ENCODE measurements at regions of chr22 and their contacts with region 1.

Region 1: GRCh38 chr22:23178512-23179254 is 1.6 kb upstream of the BCR start:
- DNase-seq: peak; percentile 56
- ATAC-seq: peak; percentile 28
- H3K4me3 Mint-ChIP-seq: peak overlapping the region; percentile 46
- H3K27ac Mint-ChIP-seq: peak overlapping the region; percentile 19
- H3K4me1 Mint-ChIP-seq: peaks cover 51% of the 10 kb centered on the region
- H3K27me3 Mint-ChIP-seq: peaks cover 3% of the 10 kb centered on the region
- CTCF ChIP-seq: peak; percentile 87

Region 2: DNA sequence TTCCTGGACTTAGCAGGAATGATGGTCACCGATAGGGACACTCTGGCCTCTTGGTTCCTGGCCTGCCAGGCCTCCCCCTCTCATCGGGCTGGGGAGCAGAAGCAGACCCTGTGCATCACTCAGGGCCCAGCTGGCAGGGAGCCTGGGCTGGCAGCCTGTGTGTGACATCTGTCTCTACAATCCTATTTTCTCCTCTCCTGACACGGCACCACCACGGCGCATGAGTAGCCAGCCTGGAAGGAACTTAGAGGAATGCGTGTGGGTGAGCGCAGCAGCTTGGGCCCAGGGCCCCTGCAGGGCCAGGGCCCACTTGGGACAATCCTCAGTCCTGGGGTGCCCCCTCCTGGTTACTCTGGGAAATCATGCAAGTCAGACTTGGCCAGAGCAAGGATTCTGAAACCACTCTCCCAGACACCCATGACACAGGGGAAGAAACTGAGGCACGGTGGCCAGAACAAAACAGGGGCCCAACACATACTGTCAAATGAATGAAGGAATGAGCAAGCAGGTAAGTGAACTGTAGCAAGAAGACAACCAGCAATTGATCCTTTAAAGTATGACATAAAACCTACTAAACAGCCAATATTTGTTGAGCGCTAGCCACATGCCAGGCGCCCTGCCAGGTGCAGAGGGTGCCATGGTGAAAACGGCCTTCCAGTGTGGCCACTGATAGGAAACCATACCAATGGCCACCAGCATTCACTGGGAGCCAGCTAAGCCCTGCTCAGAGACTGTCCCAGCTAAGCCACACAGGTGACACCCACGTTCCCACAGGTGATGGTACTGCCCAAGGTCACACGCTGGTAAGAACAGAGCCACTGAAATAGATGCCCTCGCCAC is 50.2 kb before region 1 on chr22:
- CTCF ChIA-PET with region 1: interaction called, 3 read pairs
- POLR2A ChIA-PET with region 1: no interaction called
- intact Hi-C with region 1: loop called (anchors 1 kb)
- DNase-seq: peak; percentile 64
- ATAC-seq: peak; percentile 99
- H3K4me3 Mint-ChIP-seq: no peak overlapping the region
- H3K27ac Mint-ChIP-seq: no peak overlapping the region
- H3K4me1 Mint-ChIP-seq: peaks cover 4% of the 10 kb centered on the region
- H3K27me3 Mint-ChIP-seq: no peaks in the 10 kb centered on the region
- CTCF ChIP-seq: no peak

Region 3: DNA sequence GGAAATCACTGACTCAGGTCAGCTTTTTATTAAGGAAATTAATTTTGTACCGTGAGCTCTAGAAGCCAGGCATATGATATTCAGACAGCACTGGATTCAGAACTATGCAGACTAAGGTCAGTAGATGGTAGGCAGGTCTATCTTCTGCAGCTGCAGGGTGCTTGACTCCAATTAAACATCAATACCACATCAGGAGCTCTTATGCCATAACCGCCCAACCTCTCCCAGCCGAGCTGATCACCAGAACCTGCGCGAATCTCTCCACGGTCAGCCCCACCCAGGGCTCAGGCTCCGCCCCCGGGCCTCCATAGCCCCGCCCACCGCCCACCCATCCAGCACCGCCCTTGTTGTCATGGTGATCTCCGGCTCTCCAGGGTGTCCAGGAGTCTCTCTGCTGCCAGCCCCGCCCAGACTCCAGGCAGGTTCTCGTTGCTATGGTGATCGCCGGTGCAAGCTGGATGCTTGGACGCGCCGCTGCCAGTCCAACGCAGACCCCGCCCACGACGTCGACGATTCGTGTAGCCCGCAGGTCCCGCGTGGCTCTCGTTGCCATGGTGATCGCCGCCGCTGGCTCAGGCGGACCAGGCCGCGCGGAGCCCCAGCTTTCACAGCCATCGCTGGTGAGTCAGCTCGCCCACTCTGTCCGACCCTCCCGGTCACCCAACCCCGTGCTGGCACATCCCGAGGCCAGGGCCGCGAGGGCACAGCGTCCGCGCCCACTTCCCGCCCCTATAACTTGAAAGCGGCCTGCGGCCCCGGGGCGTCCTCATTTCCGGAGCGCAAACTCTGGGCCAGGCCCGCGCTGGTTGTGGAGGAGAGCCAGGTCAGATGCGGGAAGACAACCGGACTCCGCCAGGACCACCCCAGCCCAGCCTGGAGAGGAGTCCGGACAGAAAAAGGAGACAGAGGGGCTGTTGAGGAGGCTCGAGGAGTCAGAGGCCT is 33.5 kb before region 1 on chr22 and contains the start of gene RAB36:
- CTCF ChIA-PET with region 1: interaction called, 7 read pairs
- POLR2A ChIA-PET with region 1: interaction called, 3 read pairs
- intact Hi-C with region 1: loop called (anchors 1 kb)
- DNase-seq: peak; percentile 91
- ATAC-seq: peak; percentile 65
- H3K4me3 Mint-ChIP-seq: peak within 1 kb of the TSS; percentile 81
- H3K27ac Mint-ChIP-seq: peak within 1 kb of the TSS; percentile 86
- H3K4me1 Mint-ChIP-seq: peaks cover 56% of the 10 kb centered on the region
- H3K27me3 Mint-ChIP-seq: no peaks in the 10 kb centered on the region
- CTCF ChIP-seq: no peak
- total RNA-seq, gene RAB36: 1.7 and 2.1 TPM in 2 replicates

Region 4: DNA sequence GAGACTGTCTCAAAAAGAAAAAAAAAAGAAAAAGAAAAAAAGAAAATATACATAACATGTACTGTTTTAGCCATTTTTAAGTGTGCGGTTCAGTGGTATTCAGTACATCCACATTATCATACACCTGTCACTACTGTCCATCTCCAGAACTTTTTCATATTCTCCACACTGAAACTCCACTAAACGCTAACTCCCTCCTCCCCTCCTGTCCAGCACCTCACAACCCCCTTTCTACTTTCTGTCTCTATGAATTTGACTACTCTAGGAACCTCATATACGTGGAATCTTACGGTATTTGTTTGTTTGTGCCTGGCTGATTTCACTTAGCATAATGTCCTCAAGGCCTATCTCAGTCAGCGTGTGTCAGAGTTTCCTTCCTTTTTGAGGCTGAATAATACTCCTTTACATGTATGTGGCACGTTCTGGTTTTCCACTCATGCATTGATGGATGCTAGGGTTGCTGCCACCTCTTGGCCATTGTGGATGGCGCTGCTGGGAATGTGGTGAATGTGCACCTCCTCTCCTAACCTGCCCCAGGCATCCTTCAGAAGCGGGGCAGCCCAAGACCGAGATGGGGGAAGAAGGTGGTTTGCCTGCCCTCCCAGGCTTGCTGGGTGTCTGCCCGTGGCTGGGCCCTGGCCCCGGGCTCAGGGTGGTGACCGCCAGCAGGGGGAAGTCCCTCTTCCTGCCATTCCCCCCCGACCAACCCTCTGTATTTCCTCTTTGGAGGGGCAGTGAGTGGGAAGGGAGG is 62.1 kb after region 1 on chr22:
- CTCF ChIA-PET with region 1: interaction called, 5 read pairs
- POLR2A ChIA-PET with region 1: no interaction called
- intact Hi-C with region 1: loop called (anchors 1 kb)
- DNase-seq: no peak
- ATAC-seq: peak; percentile 32
- H3K4me3 Mint-ChIP-seq: no peak overlapping the region
- H3K27ac Mint-ChIP-seq: peak overlapping the region; percentile 5
- H3K4me1 Mint-ChIP-seq: peaks cover 42% of the 10 kb centered on the region
- H3K27me3 Mint-ChIP-seq: no peaks in the 10 kb centered on the region
- CTCF ChIP-seq: no peak

Region 5: DNA sequence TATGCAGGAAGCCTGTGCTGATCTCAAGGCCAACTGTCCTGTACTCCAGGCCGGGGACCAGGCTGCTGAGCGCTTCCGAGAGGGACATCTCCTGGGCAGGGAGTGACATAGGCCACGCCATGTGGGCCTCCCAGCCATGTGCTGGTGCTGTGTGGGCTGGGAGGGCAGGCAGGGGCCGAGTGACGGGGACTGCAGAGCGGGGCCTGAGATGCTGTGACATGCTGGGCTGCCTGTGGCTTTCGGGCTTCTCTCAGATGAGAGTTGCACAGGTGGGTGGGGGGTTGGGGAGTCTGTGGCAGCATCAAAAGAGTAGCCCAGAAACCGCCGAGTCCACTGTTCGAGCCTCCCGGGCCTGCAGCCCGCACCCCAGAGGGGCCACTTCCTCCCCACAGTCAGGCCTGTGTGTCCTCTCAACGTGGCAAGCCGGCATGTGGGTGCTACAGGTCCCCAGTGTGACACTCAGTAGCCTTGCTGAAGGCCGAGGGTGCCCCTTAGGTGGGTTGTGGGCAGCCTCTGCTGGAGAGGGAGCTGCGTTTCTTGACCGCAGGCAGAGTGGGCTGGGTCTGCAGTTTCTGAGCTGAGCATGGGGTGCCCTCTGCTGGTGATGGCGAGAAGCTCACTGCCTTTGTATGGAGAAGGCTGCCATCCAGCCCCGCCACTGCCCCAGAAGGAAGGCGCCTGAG is 102.9 kb after region 1 on chr22:
- CTCF ChIA-PET with region 1: interaction called, 215 read pairs
- POLR2A ChIA-PET with region 1: interaction called, 10 read pairs
- intact Hi-C with region 1: loop called (anchors 1 kb)
- DNase-seq: peak; percentile 78
- ATAC-seq: peak; percentile 85
- H3K4me3 Mint-ChIP-seq: no peak overlapping the region
- H3K27ac Mint-ChIP-seq: no peak overlapping the region
- H3K4me1 Mint-ChIP-seq: peaks cover 16% of the 10 kb centered on the region
- H3K27me3 Mint-ChIP-seq: no peaks in the 10 kb centered on the region
- CTCF ChIP-seq: no peak